ENCODE measurements at regions of chr7 and their contacts with region 1.

Region 1: GRCh38 chr7:113179313-113179712 is 61.0 kb upstream of the SMIM30 start:
- DNase-seq: no peak
- H3K4me3 ChIP-seq: no peak overlapping the region
- H3K27ac ChIP-seq: no peak overlapping the region
- H3K4me1 ChIP-seq: no peaks in the 10 kb centered on the region
- H3K27me3 ChIP-seq: no peaks in the 10 kb centered on the region
- CTCF ChIP-seq: no peak
- POLR2A ChIP-seq: no peak

Region 2: DNA sequence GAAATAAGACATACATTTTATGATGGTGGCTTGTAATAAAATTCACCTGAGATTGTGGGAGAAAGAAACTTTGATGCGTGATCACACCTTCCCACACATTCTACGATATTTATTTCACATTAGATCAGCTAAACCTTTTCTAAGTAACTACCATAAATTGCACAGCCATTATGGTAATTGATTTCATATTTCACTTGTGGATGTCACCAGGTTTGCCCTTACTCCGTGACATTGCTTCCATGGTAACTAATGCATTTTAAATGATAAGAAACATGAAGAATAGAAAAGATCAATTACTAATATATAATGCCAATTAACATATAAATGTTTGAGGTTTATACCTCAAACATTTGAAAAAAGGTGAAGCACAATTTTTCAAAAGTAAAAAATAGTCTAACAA is 25.2 kb before region 1 on chr7:
- intact Hi-C with region 1: loop called (anchors 2 kb)
- DNase-seq: no peak
- H3K4me3 ChIP-seq: no peak overlapping the region
- H3K27ac ChIP-seq: no peak overlapping the region
- H3K4me1 ChIP-seq: no peaks in the 10 kb centered on the region
- H3K27me3 ChIP-seq: no peaks in the 10 kb centered on the region
- CTCF ChIP-seq: no peak
- POLR2A ChIP-seq: no peak

Region 3: GRCh38 chr7:113209449-113210203 is 30.3 kb after region 1 on chr7:
- intact Hi-C with region 1: loop called (anchors 2 kb)
- DNase-seq: no peak
- H3K4me3 ChIP-seq: no peak overlapping the region
- H3K27ac ChIP-seq: no peak overlapping the region
- H3K4me1 ChIP-seq: no peaks in the 10 kb centered on the region
- H3K27me3 ChIP-seq: no peaks in the 10 kb centered on the region
- CTCF ChIP-seq: no peak
- POLR2A ChIP-seq: no peak